ENCODE measurements at regions of chr12 and their contacts with region 1.

Region 1: DNA sequence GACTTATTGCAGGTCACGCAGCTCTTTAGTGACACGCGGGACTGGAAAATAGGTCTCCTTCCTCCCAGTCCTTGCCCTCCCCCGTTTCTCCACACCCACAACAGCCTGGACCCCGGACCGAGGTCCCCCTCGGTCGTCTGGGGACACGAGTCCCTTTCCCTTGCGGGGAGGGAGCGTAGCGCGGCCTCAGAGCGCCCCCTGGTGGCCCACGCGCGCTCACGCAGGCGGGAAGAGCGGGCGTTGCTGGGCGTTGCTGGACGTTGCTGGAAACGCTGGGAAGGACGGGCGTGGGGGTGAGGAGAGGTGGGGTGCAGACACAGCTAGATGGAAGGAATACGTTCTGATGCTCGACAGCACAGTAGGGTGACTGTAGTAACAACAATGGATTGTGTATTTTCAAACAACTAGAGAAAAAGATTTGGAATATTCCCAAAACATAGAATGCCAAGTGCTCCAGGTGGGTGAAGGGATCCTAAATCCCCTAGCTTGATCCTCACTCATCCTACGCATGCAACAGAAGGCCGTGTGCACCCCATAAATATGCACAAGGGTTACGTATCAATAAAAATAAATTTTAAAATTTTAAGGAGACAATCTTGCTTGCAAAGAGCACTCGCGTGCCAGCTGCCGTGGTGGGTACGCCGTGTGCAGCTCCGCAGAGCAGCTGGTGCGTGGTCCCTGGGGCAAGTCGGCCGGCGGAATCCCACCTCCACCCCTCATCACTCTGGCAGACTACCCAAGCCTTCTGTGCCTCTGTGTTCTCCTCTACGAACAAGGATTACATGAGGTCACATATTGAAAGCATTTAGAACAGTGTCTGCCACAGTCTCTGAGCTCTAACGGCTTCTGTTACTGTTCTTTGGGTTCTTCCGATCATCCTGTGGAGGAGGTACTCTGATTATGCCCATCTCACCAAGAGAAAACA is 87.4 kb downstream of the B4GALNT3 start:
- DNase-seq: no peak
- H3K4me3 ChIP-seq: no peak overlapping the region
- CTCF ChIP-seq: peak in 1 of 3 donors; percentile 82
- POLR2A ChIP-seq: no peak

Region 2: DNA sequence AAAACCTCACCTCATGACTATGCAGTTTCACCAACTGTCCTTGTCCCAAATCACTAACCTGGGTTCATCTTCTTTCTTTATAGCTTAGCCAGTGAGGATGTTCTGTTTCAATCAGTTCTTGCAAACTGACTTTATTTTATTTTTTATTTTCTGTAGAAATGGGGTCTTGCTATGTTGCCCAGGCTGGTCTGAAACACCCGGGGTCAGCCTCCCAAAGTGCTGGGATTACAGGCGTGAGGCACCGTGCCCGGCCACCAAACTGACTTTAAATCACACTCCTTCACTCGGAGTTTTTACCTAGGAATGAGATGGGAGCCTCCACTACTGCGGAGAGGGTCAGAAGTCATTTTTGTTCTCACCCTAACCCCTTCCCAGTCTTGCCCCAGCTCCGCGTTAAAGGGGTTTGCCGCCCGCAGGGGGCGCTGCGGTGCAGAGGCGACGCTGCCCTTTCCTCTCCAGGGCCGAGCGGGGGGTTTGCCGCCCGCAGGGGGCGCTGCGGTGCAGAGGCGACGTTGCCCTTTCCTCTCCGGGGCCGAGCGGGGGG is 94.4 kb before region 1 on chr12:
- intact Hi-C with region 1: loop called (anchors 5 kb)
- DNase-seq: no peak
- H3K4me3 ChIP-seq: no peak overlapping the region
- CTCF ChIP-seq: no peak
- POLR2A ChIP-seq: no peak

Measured in lower leg skin (tissue), 4 donors.